MCF 10A (cell line): ENCODE measurements at regions of chr10 and their contacts with region 1.

Region 1: DNA sequence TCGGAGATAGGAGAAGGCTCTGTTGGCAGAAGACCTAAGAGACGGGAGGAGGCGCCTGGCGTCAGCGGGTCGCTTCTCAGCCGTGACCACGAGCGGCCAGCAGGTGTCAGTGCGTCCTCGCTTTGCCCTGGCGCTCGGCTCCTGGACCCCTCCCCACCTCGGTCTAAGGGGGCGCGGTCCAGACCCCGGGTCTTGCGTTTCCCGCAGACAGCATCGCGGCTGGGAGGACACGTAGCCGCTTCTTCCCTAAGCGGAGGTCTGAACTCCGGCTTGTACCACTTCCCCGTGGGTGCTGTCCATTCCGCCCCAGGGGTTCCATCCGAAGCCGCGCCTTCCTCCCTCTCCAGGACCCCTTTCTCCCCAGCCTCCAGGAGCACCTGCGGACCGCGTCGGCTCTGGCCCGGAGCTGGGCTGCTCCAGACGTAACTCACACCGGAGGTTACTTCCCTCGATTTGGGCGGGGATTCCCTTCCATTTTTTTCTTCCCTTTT is 593 bp upstream of the ADRA2A start:
- DNase-seq: peak; percentile 42
- H3K4me3 Mint-ChIP-seq: peak overlapping the region; percentile 69
- H3K27ac Mint-ChIP-seq: no peak overlapping the region
- H3K4me1 Mint-ChIP-seq: no peaks in the 10 kb centered on the region
- H3K27me3 Mint-ChIP-seq: peaks cover 46% of the 10 kb centered on the region
- CTCF ChIP-seq: peak; percentile 88

Region 2: DNA sequence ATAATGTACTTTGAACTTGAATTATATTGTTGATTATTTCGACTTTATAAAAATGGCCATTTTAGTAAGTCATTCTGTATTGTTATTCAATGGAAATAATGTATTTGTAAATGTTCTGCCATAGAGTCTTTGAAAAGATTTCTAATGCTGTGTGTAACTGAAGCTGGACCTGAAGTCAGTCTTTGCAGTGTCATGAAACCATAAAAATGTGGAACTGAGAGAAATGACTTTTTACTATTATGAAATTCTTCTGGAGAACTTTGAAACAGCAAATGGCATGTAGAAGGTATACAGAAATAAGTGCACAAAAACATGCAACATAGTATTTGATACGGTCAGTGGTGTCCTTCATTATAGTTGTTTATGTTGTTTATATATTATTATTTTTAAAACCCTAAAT is 59.1 kb before region 1 on chr10:
- CTCF ChIA-PET with region 1: no interaction called
- POLR2A ChIA-PET with region 1: no interaction called
- intact Hi-C with region 1: no loop called
- DNase-seq: no peak
- H3K4me3 Mint-ChIP-seq: no peak overlapping the region
- H3K27ac Mint-ChIP-seq: no peak overlapping the region
- H3K4me1 Mint-ChIP-seq: peaks cover 9% of the 10 kb centered on the region
- H3K27me3 Mint-ChIP-seq: no peaks in the 10 kb centered on the region
- CTCF ChIP-seq: no peak

Region 3: GRCh38 chr10:111323389-111323966 is 247.2 kb after region 1 on chr10:
- CTCF ChIA-PET with region 1: interaction called, 3 read pairs
- POLR2A ChIA-PET with region 1: no interaction called
- intact Hi-C with region 1: loop called (anchors 2 kb)
- DNase-seq: peak; percentile 13
- H3K4me3 Mint-ChIP-seq: no peak overlapping the region
- H3K27ac Mint-ChIP-seq: no peak overlapping the region
- H3K4me1 Mint-ChIP-seq: no peaks in the 10 kb centered on the region
- H3K27me3 Mint-ChIP-seq: peaks cover 39% of the 10 kb centered on the region
- CTCF ChIP-seq: peak; percentile 11

Region 4: GRCh38 chr10:111360260-111360925 is 284.2 kb after region 1 on chr10:
- CTCF ChIA-PET with region 1: interaction called, 4 read pairs
- POLR2A ChIA-PET with region 1: interaction called, 3 read pairs
- intact Hi-C with region 1: loop called (anchors 1 kb)
- DNase-seq: peak; percentile 63
- H3K4me3 Mint-ChIP-seq: no peak overlapping the region
- H3K27ac Mint-ChIP-seq: no peak overlapping the region
- H3K4me1 Mint-ChIP-seq: no peaks in the 10 kb centered on the region
- H3K27me3 Mint-ChIP-seq: peaks cover 61% of the 10 kb centered on the region
- CTCF ChIP-seq: peak; percentile 66